Heart left ventricle (tissue), 16 donors: ENCODE measurements at regions of chr1 and their contacts with region 1.

Region 1: DNA sequence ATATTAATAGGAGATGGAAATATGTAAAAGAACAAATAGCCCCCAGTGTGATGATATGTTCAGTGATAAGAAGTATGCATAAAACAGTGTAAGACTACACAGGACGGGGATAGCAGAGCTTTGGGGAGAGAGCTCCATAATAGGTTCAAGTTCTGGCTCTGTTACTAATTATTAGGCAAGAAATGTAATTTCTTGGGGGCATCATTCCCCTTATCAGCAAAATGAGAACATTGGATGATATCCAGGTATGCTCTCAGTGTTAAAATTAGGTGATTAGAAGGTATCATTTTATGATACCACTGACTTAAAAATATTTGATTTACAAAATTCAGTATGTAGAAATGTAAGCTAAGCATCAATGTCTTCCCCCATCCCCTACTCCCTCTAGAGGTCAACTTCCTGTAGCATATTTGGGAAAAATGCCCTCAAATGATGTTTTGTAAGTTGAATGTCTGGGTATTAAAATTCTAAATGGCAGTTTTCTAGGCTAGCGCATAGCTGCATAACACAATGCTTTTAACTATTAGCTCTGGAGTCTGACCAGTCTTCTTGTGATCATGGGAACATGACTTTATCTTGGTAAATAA is 585.7 kb upstream of the CAMK1G start:
- DNase-seq: no peak
- ATAC-seq: no peak
- H3K4me3 ChIP-seq: no peak overlapping the region
- H3K27ac ChIP-seq: no peak overlapping the region
- H3K4me1 ChIP-seq: no peaks in the 10 kb centered on the region
- H3K27me3 ChIP-seq: no peaks in the 10 kb centered on the region
- CTCF ChIP-seq: peak in 5 of 12 donors; percentile 6 to 23 (median 12)
- POLR2A ChIP-seq: no peak

Region 2: DNA sequence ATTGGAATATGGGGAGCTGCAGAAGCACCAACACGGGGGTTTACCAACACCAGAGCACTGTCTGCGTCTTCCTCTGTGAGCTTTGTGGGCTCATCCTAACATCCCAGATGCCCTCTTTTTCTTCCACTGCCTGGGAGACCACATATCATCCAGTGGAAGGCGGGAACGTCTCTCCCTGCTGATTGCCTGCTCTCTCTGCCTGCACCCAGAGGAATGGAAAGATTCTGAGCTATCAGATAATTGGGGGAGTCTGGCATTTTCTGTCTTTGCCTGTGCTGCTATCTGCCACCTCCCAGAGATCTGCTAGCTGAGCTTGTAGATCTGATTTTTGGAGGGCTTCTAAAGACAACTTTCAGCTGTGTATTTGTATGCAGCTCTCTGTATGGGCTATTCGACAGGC is 587.4 kb before region 1 on chr1:
- intact Hi-C with region 1: loop called in 1 of 10 experiments (anchors 5 kb)
- DNase-seq: no peak
- ATAC-seq: no peak
- H3K4me3 ChIP-seq: no peak overlapping the region
- H3K27ac ChIP-seq: no peak overlapping the region
- H3K4me1 ChIP-seq: no peaks in the 10 kb centered on the region
- H3K27me3 ChIP-seq: no peaks in the 10 kb centered on the region
- CTCF ChIP-seq: no peak
- POLR2A ChIP-seq: no peak